HEK293T (cell line): ENCODE measurements at regions of chr2 and their contacts with region 1.

Region 1: DNA sequence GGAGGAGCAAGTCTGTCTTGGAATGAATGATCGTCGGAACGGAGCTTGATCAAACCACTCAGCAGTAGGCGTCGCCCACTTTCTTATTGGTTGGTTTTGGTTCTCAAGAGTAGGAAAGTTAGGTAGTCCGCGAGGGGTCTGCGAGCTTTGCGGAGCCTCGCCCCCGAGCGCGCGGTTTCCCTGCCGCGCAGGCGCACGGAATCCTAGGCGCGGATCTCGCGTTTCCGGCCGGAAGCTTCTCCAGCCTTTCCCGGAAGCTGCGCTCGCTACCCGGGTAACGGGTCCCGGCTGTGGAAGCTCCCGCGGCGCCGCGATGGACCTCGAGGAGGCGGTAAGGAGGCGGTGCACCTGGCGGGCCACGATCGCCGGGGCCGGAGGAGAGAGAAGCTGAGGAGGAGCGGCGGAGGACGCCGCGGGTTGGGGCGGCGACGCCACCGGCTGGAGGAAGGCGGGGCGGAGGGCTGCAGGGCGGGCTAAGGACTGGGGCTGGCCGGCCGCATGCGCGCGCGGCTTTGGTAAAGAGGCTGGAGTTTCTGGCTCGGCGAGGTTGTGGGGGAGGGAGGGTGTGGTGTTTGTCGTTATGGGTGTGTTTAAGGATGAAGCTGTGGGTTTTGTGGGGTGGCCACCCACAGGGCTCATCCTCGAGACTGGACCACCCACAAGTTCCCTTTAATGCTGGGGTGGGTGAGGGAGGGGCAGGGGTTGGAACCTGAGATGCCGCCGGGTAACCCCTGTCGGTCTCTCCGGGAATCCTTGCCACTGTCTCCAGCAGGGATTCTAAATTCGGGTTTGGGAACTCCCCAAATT is at the start of gene TAF1B:
- DNase-seq: peak; percentile 95

Region 2: DNA sequence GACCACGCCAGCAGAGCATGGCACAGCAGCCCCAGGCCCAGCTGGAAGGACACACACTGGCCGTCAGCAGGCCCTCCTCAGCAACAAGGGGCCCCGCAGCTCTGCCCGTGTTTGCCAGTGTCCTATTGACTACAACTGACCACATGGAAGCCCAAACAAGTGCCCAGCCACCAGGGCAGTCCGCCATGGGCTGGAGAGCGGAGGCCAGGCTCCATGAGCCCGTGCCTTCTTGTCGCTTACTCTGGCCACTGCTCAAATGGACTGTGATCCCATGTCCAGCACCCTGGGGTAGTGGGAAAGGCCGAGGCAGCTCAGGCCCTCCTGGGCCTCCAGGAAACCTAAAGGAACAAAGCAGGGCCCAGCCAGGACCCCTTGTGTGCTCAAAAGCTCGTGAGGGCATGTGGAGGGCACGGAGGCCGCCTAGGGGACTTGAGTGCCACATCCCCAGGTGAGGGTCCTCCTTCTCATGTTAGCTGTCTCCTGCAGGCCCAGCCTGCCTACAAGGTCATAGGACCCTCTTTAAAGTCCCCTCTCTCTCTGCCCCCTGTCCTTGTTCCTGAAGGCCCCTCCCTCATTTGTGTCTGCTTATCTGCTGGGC is 54.0 kb before region 1 on chr2:
- CTCF ChIA-PET with region 1: no interaction called
- POLR2A ChIA-PET with region 1: no interaction called
- DNase-seq: no peak

Region 3: GRCh38 chr2:9799665-9800632 is 43.5 kb before region 1 on chr2:
- CTCF ChIA-PET with region 1: interaction called, 5 read pairs
- POLR2A ChIA-PET with region 1: interaction called, 12 read pairs
- DNase-seq: peak; percentile 91

Region 4: DNA sequence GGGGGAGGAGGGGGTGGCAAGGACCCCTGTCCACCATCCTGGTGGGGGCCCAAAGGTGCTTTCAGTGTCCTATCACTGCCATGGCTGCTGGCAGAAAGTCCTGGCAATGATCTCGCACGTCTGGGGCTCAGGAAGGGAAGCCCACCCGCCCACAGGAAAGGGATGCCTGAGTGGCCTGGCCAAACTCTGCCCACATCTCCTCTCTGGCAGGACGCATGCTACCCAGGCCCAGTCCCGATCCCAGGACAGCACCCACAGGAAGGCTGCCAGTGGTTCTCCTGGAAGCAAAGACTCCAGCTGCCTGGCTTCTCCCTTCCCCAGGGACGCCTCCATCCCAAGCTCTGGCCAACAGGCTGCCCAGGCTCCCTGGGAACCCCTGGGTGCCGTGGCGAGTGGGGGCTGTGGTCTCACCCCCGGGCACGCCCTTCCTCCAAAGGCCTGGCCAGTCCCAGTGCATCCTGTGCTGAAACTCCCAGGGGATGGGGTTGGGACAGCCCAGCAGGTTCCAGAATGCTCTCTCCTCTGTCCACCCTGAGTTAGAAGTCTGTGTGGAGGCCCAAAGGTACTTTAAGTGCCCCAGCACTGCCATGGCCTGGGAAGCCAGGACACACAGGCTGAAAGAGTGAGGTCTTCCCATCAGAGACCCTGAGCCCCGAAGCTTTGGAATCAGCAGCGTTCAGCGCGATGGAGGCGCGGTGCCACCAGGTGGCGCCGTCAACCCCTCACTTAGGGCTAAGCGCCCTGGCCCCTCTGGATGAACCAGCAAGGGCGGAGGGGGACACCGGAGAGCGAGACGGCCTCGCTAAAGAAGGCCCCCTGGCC is 29.9 kb before region 1 on chr2:
- CTCF ChIA-PET with region 1: interaction called, 5 read pairs
- POLR2A ChIA-PET with region 1: interaction called, 38 read pairs
- DNase-seq: peak; percentile 87

Region 5: DNA sequence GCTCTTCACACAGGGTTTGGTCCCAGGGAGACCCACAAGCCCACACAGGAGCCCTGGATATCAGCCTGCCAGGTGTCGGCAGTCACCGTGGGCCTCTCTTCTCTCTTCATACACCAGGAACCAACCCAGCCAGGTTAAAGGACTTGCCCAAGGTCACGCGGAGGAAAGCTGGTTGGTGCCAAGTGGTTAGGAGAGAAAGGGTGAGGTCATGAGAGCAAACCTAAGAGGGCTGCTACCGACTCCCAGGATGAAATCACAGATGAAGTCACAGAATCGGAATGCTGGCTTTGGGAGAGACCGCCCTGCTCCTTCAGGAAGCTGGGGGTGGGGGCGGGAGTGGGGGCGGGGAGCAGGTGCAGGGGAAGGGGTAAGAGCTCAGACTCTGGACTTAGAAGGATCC is 23.4 kb before region 1 on chr2:
- CTCF ChIA-PET with region 1: interaction called, 3 read pairs
- POLR2A ChIA-PET with region 1: interaction called, 38 read pairs
- DNase-seq: no peak

Region 6: GRCh38 chr2:9830690-9831410 is 12.6 kb before region 1 on chr2:
- CTCF ChIA-PET with region 1: interaction called, 3 read pairs
- POLR2A ChIA-PET with region 1: interaction called, 11 read pairs
- DNase-seq: no peak